GM12878 (cell line): ENCODE measurements at regions of chr22 and their contacts with region 1.

Region 1: DNA sequence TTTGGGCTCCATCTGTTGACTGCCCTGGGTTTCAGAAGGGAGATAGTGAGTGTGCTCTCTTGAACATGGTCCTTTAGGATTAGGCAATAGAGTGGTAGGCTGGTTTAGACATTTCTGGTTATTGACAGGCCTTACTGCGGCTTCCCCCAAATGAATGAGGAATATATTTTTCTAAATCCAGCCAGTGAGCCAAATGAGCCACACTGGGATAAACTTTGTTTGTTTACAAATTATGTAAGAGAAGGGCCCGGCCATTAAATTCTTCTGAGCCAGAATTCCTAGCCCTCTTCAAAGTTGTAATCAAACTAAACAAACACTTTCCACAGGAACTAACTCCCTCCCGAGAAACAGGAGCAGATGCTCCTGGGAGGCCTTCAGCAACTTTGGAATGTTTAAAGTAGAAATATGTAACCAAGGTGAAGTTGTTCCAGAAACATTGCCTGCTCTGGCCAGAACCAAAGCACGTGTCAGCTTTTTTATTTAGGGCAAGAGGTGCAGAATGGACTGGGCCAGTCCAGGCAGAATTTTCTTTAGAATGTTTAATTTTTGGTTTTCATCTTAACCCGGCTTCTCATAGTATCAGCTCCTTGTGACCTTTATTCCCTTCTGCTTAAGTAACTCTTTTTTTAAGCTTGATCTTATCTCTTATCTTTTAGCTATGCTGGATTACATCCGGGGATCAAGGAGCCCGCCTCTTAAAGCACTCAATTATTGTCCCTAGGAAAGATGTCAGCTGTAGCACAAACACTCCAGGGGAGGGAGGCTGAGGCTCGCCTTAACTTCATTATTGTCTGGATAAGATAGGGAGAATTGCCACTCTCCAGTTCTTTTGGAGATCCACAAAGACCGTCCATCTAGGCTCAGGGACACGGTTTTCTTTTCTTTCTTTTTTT is 28.7 kb downstream of the ZNRF3 start:
- DNase-seq: no peak
- ATAC-seq: no peak
- H3K4me3 ChIP-seq: no peak overlapping the region
- H3K27ac ChIP-seq: no peak overlapping the region
- H3K4me1 ChIP-seq: peaks cover 22% of the 10 kb centered on the region
- H3K27me3 ChIP-seq: no peaks in the 10 kb centered on the region; a peak in 1 of 4 replicates
- CTCF ChIP-seq: no peak
- EP300 ChIP-seq: no peak
- POLR2A ChIP-seq: no peak
- RAD21 ChIP-seq: no peak

Region 2: DNA sequence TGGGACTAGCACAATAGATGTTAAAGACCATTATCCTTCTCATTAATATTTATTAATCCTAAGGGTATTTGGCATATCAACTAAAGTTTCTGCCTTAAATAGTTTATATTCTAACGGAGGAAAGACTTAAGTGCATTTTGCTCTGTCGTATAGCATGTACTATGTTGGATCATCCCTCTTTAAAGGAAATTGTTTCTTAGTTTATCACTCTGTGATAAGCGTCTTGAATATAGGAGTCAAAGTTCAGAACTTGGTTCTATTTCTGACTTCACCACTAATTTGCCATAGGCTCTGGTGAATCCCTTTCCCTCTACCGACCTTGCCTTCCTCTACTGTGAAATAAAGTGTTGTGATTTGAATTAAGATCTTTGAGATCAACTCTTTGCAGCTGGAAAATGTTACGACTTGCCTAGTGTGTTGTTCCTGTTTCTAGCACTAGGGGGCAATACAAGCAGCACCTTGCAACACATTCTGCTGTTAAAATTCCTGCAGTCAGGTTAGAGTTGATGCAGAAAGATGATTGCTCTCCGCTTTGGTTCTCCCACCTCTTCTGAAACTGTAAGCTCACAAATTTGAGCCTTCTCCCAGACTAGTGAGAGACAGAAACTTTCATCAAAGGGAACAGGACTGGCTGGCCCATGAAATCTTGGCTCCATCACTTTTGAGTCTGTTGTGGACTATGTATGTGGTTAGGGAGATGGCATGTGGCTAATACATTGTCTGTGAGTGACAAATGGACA is 56.5 kb before region 1 on chr22:
- CTCF ChIA-PET with region 1: interaction called, 12 read pairs
- POLR2A ChIA-PET with region 1: no interaction called
- RAD21 ChIA-PET with region 1: no interaction called
- SMC1A ChIA-PET with region 1: interaction called, 3 read pairs
- in situ Hi-C with region 1: no loop called
- intact Hi-C with region 1: loop called (anchors 5 kb)
- DNase-seq: peak; percentile 27
- ATAC-seq: peak; percentile 79
- H3K4me3 ChIP-seq: no peak overlapping the region
- H3K27ac ChIP-seq: no peak overlapping the region
- H3K4me1 ChIP-seq: no peaks in the 10 kb centered on the region
- H3K27me3 ChIP-seq: no peaks in the 10 kb centered on the region; a peak in 1 of 4 replicates
- CTCF ChIP-seq: peak; percentile 85 to 90 (median 87); a peak in 5 of 6 replicates
- EP300 ChIP-seq: no peak
- POLR2A ChIP-seq: no peak
- RAD21 ChIP-seq: peak; percentile 94

Region 3: GRCh38 chr22:28899199-28899853 is 12.7 kb before region 1 on chr22:
- CTCF ChIA-PET with region 1: interaction called, 78 read pairs
- POLR2A ChIA-PET with region 1: interaction called, 10 read pairs
- RAD21 ChIA-PET with region 1: interaction called, 84 read pairs
- SMC1A ChIA-PET with region 1: interaction called, 117 read pairs
- in situ Hi-C with region 1: no loop called
- intact Hi-C with region 1: no loop called
- DNase-seq: no peak
- ATAC-seq: peak; percentile 77
- H3K4me3 ChIP-seq: no peak overlapping the region
- H3K27ac ChIP-seq: no peak overlapping the region
- H3K4me1 ChIP-seq: no peaks in the 10 kb centered on the region
- H3K27me3 ChIP-seq: no peaks in the 10 kb centered on the region; a peak in 2 of 4 replicates
- CTCF ChIP-seq: no peak
- EP300 ChIP-seq: no peak
- POLR2A ChIP-seq: no peak
- RAD21 ChIP-seq: no peak

Region 4: GRCh38 chr22:29011240-29012100 is 99.4 kb after region 1 on chr22:
- CTCF ChIA-PET with region 1: interaction called, 3 read pairs
- POLR2A ChIA-PET with region 1: interaction called, 12 read pairs
- RAD21 ChIA-PET with region 1: interaction called, 49 read pairs
- SMC1A ChIA-PET with region 1: interaction called, 25 read pairs
- in situ Hi-C with region 1: no loop called
- intact Hi-C with region 1: loop called (anchors 5 kb)
- DNase-seq: no peak
- ATAC-seq: no peak
- H3K4me3 ChIP-seq: no peak overlapping the region
- H3K27ac ChIP-seq: no peak overlapping the region
- H3K4me1 ChIP-seq: no peaks in the 10 kb centered on the region
- H3K27me3 ChIP-seq: 0 out of 4 replicates have a peak, but pooled peaks cover 0 to 2% of the 10 kb centered on the region in 2 experiments
- CTCF ChIP-seq: no peak
- EP300 ChIP-seq: no peak
- POLR2A ChIP-seq: no peak
- RAD21 ChIP-seq: no peak

Region 5: GRCh38 chr22:29167032-29167911 is 255.2 kb after region 1 on chr22:
- CTCF ChIA-PET with region 1: no interaction called
- POLR2A ChIA-PET with region 1: no interaction called
- RAD21 ChIA-PET with region 1: no interaction called
- SMC1A ChIA-PET with region 1: interaction called, 3 read pairs
- in situ Hi-C with region 1: no loop called
- intact Hi-C with region 1: loop called (anchors 5 kb)
- DNase-seq: peak; percentile 100
- ATAC-seq: peak; percentile 88
- H3K4me3 ChIP-seq: no peak overlapping the region
- H3K27ac ChIP-seq: peak overlapping the region; percentile 76
- H3K4me1 ChIP-seq: peaks cover 27% of the 10 kb centered on the region
- H3K27me3 ChIP-seq: no peaks in the 10 kb centered on the region; a peak in 1 of 4 replicates
- CTCF ChIP-seq: no peak
- EP300 ChIP-seq: peak; percentile 98
- POLR2A ChIP-seq: no peak
- RAD21 ChIP-seq: peak; percentile 17; the same call in 1 of the 2 replicates